Mammary epithelial cell (primary cell): ENCODE measurements at regions of chr7 and their contacts with region 1.

Region 1: DNA sequence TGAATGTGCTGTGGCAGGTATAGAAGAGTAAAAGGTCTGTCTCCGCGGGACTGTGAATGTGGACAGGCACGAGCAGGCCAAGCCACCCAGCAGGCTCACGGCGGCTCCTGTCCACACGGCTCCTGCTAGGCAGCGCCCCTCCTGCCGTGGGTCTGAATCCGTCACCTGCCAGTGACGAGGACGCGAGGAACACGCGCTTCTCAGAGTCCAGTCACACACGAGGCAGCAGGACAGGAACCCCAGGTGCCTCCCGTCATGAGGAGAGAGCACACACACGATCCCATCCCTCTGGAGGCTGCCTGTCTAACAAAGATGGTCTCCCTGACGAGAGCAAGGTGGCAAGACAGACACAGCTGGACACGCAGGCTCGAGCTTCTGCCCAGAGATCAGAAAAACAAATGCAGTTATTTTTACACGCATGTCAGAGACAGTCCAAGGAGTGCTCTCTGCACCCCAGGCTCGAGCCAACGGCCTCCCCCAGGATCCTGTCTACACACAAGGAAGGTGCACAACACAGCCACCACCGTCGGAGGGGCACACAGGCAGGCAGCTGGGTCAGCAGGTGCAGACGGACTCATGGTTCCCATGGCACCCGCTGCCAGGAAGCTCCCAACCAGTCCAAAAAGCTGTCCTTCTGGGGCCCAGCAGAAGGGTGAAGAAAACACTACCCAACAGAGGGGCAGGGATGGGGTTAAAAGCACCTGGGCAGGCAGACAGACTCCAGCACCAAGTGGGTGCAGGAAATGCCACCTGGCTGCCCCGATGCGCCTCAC is 103.2 kb downstream of the MAD1L1 start:
- DNase-seq: no peak
- H3K4me3 ChIP-seq: no peak overlapping the region
- H3K27ac ChIP-seq: no peak overlapping the region
- H3K4me1 ChIP-seq: no peaks in the 10 kb centered on the region
- H3K27me3 ChIP-seq: no peaks in the 10 kb centered on the region
- CTCF ChIP-seq: no peak

Region 2: GRCh38 chr7:2009541-2010001 is 119.9 kb before region 1 on chr7:
- CTCF ChIA-PET with region 1: no interaction called
- dilution Hi-C with region 1: loop called (anchors 5 kb)
- in situ Hi-C with region 1: no loop called
- intact Hi-C with region 1: no loop called
- DNase-seq: no peak
- H3K4me3 ChIP-seq: no peak overlapping the region
- H3K27ac ChIP-seq: no peak overlapping the region
- H3K4me1 ChIP-seq: peaks cover under 1% of the 10 kb centered on the region
- H3K27me3 ChIP-seq: no peaks in the 10 kb centered on the region
- CTCF ChIP-seq: no peak

Region 3: DNA sequence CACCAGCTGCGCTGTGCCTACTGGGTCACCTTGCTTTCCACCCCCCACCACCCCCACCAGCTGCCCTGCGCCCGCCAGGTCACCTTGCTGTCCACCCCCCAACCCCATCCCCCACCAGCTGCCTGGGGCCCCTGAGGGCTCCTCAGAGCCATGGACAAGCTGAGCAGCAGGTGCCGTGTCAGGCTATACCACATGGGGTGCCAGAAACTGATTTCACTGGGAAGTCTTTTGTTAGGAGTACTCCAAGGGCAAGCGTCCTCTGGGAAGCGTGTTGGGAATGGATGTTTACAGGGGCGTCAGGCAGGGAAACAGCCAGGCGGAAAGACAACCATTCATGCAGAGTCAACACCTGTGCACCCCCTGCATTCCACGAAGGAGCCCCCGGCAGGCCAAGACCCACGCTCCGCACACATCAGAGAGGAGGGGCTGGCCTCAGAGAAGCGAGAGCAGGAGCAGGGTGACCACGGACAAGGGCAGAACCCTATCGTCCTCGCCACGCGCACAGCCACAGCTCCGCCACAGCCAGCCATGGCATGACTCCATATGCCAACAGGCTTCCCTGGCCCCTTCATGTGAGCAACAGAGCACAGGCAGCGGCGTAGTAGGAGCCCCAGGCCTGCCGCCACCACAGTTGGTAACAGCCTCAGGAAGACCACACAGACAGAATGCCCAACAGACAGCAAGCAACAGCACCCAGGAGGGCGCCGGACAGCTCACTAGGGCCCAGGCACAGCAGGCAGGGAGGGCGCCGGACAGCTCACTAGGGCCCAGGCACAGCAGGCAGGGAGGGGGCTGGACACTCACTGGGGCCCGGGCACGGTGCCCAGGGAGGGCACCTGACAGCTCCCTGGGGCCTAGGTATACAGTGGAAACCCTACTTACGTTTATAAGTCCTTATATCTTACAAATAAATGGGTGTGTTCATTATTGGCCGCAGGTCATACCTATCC is 77.5 kb before region 1 on chr7:
- CTCF ChIA-PET with region 1: no interaction called
- dilution Hi-C with region 1: no loop called
- in situ Hi-C with region 1: no loop called
- intact Hi-C with region 1: no loop called
- DNase-seq: no peak
- H3K4me3 ChIP-seq: no peak overlapping the region
- H3K27ac ChIP-seq: no peak overlapping the region
- H3K4me1 ChIP-seq: peaks cover 3% of the 10 kb centered on the region
- H3K27me3 ChIP-seq: no peaks in the 10 kb centered on the region
- CTCF ChIP-seq: no peak

Region 4: DNA sequence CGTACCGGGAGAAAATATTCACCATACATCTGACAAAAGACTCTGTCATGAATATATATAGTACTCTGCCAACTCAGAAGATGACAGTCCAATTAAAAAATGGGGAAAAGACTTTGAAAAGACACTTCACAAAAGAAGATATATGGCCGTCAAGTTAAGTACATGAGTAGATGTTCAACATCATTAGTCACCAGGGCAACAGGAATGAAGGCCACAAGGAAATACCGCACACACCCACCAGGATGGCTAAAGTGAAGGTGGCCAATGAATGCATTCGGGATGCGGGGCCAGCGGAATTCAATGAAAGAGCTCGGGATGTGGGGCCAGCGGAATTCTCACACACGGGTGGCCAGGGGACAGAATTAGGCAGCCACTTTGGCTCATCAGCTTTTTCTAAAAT is 61.0 kb after region 1 on chr7:
- CTCF ChIA-PET with region 1: no interaction called
- dilution Hi-C with region 1: loop called (anchors 5 kb)
- in situ Hi-C with region 1: no loop called
- intact Hi-C with region 1: no loop called
- DNase-seq: no peak
- H3K4me3 ChIP-seq: no peak overlapping the region
- H3K27ac ChIP-seq: no peak overlapping the region
- H3K4me1 ChIP-seq: peaks cover 5% of the 10 kb centered on the region
- H3K27me3 ChIP-seq: no peaks in the 10 kb centered on the region
- CTCF ChIP-seq: no peak